ENCODE measurements at regions of chr10 and their contacts with region 1.

Region 1: GRCh38 chr10:47176903-47177868 is 122.8 kb upstream of the GDF10 start:
- DNase-seq: no peak
- ATAC-seq: no peak
- H3K4me3 ChIP-seq: no peak overlapping the region
- H3K27ac ChIP-seq: no peak overlapping the region
- H3K4me1 ChIP-seq: no peaks in the 10 kb centered on the region
- H3K27me3 ChIP-seq: no peaks in the 10 kb centered on the region; a peak in 1 of 4 replicates
- CTCF ChIP-seq: no peak
- EP300 ChIP-seq: no peak
- POLR2A ChIP-seq: no peak
- RAD21 ChIP-seq: no peak

Region 2: DNA sequence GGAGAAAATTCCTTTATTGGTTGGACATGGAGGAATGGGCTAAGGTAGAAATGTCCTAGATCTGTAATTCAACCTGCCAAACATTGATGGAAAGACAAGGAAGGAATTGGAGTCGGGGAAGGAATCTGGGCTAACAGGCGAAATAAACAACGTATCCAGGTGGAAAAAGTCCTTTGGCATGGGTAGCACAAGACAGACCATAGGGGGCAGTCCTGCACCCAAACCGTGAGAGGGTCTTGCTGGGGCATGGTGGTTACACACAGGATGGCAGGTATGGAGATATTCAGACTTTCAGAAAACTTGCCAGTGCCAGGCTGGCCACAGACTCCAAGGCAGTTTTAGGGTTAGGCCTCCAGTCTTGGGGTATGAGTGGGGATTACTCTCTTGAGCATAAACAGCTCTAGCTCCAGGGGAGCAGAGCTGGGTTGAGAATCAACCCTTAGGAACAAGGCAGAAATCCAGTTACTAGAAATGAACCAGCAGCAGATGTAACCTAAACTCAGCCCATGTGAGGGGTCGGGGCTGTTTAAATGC is 65.8 kb before region 1 on chr10:
- CTCF ChIA-PET with region 1: no interaction called
- POLR2A ChIA-PET with region 1: no interaction called
- RAD21 ChIA-PET with region 1: no interaction called
- SMC1A ChIA-PET with region 1: no interaction called
- in situ Hi-C with region 1: no loop called
- intact Hi-C with region 1: loop called (anchors 10 kb)
- DNase-seq: no peak
- ATAC-seq: no peak
- H3K4me3 ChIP-seq: no peak overlapping the region
- H3K27ac ChIP-seq: no peak overlapping the region
- H3K4me1 ChIP-seq: no peaks in the 10 kb centered on the region
- H3K27me3 ChIP-seq: peaks cover 0 to 2% of the 10 kb centered on the region in 2 experiments; a peak in 1 of 4 replicates
- CTCF ChIP-seq: no peak
- EP300 ChIP-seq: no peak
- POLR2A ChIP-seq: no peak
- RAD21 ChIP-seq: no peak

Region 3: GRCh38 chr10:47458466-47459154 is 281.4 kb after region 1 on chr10:
- CTCF ChIA-PET with region 1: no interaction called
- POLR2A ChIA-PET with region 1: no interaction called
- RAD21 ChIA-PET with region 1: no interaction called
- SMC1A ChIA-PET with region 1: no interaction called
- in situ Hi-C with region 1: no loop called
- intact Hi-C with region 1: no loop called
- DNase-seq: no peak
- ATAC-seq: no peak
- H3K4me3 ChIP-seq: no peak overlapping the region
- H3K27ac ChIP-seq: no peak overlapping the region
- H3K4me1 ChIP-seq: no peaks in the 10 kb centered on the region
- H3K27me3 ChIP-seq: peaks cover 0 to 1% of the 10 kb centered on the region in 2 experiments; a peak in 2 of 4 replicates
- CTCF ChIP-seq: no peak
- EP300 ChIP-seq: no peak
- POLR2A ChIP-seq: no peak
- RAD21 ChIP-seq: no peak

Measured in GM12878 (cell line).